Cardiac septum (tissue), 1 donor: ENCODE measurements at regions of chr7 and their contacts with region 1.

Region 1: DNA sequence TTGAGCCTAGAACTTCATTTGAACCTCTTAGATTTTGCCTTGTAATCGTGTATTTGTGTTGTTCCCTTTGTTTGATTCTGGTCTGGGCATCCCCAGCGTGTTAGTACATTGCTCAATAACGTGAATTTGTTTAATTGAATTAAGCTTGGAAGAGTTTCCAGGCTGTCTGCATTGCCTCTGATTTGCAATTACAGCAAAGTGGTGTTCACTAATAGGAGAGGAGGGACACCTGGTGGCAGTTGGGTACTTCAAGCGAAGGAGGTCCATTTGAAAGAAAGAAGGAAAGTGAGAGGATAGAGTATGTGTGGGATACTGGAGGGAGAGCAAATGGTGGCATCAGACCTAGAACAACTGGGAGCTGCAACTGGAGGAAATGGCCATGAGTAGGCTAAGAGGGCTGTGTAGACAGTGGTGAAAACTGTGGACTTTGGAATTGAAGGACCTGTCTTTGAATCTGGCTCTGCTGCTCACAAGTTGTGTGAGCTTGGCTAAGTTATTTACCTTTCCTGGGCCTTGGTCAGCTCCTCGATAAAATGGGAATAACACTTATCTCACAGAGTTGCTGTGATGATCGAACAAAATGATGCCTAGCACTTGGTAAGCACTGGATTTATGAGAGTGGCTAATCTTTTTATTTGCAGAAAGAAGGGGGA is 15.1 kb downstream of the LSMEM1 start:
- DNase-seq: no peak

Region 2: GRCh38 chr7:111741811-111742240 is 754.1 kb before region 1 on chr7:
- intact Hi-C with region 1: loop called (anchors 10 kb)
- DNase-seq: no peak

Region 3: GRCh38 chr7:112206238-112207044 is 289.5 kb before region 1 on chr7 and contains the starts of genes DOCK4 and ZNF277:
- intact Hi-C with region 1: loop called (anchors 10 kb)
- DNase-seq: peak; percentile 99
- total RNA-seq, gene DOCK4: 18.5 TPM
- total RNA-seq, gene ZNF277: 16.3 TPM

Region 4: DNA sequence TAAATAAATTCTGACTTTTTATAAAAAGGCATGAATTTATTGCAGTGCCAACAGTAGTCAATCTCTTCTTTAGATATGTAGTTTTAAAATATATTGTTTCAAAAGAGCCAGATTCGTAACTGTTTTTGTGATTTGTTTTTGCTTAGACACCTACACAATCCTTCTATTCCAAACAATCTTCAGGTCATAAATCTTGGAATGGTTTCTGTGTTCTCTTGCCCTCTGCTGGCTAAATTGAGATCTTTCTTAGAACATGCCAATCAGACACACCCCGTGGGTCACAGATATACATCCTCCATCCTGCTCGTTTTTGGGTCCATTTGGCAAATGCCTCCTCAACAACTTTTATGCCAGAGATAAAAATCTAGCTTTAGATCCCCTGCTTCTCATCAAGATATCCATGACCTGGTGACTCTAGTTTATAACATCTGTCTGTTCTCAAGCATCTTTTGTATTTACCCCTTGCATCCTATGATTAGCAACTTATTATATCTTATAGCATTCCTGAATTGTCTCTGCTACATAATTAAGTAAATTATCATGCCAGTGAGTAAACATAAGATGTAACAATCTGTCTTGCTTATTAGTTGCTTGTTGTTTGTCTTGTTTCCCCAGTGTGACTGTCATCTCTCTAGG is 81.0 kb before region 1 on chr7:
- intact Hi-C with region 1: loop called (anchors 10 kb)
- DNase-seq: no peak